Ascending aorta (tissue), 2 donors: ENCODE measurements at regions of chr12 and their contacts with region 1.

Region 1: GRCh38 chr12:52980693-52981423 is 25.4 kb upstream of the EIF4B start:
- DNase-seq: peak; percentile 50 to 95
- H3K4me3 ChIP-seq: no peak overlapping the region
- H3K27ac ChIP-seq: no peak overlapping the region
- H3K4me1 ChIP-seq: no peaks in the 10 kb centered on the region
- H3K27me3 ChIP-seq: no peaks in the 10 kb centered on the region
- CTCF ChIP-seq: peak; percentile 87 to 99 (median 96)

Region 2: GRCh38 chr12:52156736-52157565 is 823.9 kb before region 1 on chr12:
- intact Hi-C with region 1: loop called (anchors 2 kb)
- DNase-seq: peak in 1 of 2 donors; percentile 88
- H3K4me3 ChIP-seq: no peak overlapping the region
- H3K27ac ChIP-seq: no peak overlapping the region
- H3K4me1 ChIP-seq: peaks cover 0 to 6% of the 10 kb centered on the region in 2 donors
- H3K27me3 ChIP-seq: no peaks in the 10 kb centered on the region
- CTCF ChIP-seq: peak; percentile 87 to 98 (median 95)

Region 3: DNA sequence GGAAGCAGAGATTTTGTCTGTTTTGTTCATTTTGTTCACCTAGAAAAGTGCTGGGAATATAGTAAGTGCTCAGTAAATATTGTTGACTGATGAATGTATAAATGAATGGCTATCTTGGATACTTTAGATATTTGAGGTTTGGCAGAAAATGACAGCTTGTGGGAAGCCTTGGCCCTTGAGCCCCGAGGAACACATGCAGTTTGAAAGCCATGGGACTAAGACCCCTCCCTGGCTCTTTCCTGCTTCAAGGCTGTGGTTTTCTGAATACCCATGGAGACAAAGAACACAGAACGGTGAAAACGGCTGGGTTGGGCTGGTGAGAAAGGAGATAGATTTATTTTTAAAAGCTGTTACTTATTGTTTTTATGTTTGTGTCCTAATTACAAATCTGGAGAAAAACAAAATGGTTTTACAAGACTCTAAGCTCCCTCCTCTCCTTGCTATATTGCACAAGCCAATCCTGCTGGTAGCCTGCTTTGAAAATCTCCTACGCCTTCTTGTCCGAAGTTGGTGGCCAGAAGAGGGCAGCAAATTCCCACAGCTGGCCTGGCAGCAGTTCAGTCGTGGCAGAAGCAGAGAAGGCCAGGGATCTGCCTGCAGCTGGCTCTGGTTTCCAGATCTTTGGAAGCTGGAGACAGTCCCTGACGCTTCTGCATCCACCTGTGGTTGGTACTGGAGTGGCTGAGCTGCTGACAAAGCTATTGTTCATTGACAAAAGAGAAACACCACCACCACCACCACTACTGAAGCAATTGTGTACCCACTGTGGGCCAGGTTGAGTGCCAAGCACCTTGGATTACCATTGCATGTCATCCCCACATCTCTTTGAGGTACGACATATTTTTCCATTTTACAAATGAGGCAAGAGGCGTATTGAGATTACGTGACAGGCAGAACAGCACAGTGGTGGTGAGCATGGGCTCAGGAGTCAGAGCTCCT is 608.4 kb before region 1 on chr12:
- intact Hi-C with region 1: loop called (anchors 10 kb)
- DNase-seq: peak; percentile 29 to 87
- H3K4me3 ChIP-seq: no peak overlapping the region
- H3K27ac ChIP-seq: peak overlapping the region in 1 of 2 donors; percentile 68
- H3K4me1 ChIP-seq: peaks cover 0 to 11% of the 10 kb centered on the region in 2 donors
- H3K27me3 ChIP-seq: no peaks in the 10 kb centered on the region
- CTCF ChIP-seq: peak; percentile 65 to 84 (median 66)

Region 4: DNA sequence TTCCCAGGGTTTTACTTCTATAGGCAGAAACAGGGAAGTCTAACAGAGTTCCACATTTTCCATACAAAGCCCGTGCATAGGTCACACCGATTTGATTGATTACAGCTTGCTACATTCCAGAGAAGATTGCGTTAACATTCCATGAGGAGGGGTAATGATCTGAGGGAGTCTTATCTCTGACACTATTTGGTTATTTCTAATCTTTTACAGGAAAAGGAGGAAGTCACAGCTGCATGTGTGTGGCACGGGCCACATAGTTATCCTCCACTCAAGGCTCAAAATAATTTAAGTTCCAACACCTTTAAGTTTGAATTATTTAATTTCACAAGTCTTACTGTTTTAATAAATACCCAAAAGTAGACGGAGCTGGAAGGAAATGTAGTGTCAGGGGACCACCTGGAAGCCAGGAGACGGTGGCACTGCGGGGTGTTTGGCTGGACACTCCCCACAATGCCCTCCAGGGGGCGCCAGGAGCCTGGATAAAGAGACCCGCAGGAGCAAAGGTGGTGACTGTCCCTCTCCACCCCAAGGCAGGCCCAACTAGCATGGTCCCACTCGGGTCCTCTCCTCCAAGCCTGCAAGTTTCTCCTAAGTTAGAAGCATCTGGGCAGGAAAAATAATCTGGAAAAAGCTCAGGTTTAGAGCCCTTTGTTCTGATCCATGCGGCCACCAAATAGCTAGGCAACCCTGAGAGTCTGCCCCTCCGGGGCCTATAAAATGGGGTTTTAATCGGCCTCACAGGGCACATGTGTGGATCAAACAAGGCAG is 96.1 kb before region 1 on chr12:
- intact Hi-C with region 1: loop called (anchors 1 kb)
- DNase-seq: peak in 1 of 2 donors; percentile 82
- H3K4me3 ChIP-seq: no peak overlapping the region
- H3K27ac ChIP-seq: no peak overlapping the region
- H3K4me1 ChIP-seq: no peaks in the 10 kb centered on the region
- H3K27me3 ChIP-seq: no peaks in the 10 kb centered on the region
- CTCF ChIP-seq: peak; percentile 84 to 89 (median 88)

Region 5: DNA sequence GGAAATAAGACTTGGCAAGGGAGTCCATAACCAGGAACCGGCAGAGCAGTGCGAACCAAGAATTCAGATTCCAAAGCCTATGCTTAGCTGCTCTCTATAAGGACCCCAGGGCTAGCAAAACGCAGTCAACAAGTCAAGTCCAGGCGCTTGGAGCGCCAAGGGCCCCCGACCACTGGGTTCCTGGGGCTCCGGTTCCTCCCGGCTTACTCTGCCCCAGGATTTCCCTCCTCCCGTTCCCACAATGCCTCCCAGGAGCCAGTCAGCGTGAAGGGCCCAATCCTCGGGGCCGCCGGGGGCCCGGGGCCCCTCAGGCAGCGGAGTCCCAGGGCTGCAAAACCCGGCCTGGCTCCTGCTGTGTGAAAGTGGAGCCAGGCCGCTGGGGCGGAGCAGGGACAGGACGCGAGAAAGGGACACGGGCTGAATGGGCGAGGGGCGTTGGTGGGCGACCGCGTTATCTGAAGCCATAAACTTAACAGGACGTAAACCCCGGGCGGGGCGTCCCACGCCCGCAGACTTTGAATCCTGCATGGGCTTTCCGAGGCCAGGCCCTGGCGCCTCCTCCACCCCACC is 77.5 kb before region 1 on chr12:
- intact Hi-C with region 1: loop called (anchors 5 kb)
- DNase-seq: peak; percentile 21 to 87
- H3K4me3 ChIP-seq: peak overlapping the region; percentile 71 to 73
- H3K27ac ChIP-seq: peak overlapping the region; percentile 68 to 83
- H3K4me1 ChIP-seq: peaks cover 0 to 10% of the 10 kb centered on the region in 2 donors
- H3K27me3 ChIP-seq: no peaks in the 10 kb centered on the region
- CTCF ChIP-seq: no peak

Region 6: GRCh38 chr12:52942066-52942900 is 38.6 kb before region 1 on chr12:
- intact Hi-C with region 1: no loop called
- DNase-seq: no peak
- H3K4me3 ChIP-seq: no peak overlapping the region
- H3K27ac ChIP-seq: no peak overlapping the region
- H3K4me1 ChIP-seq: no peaks in the 10 kb centered on the region
- H3K27me3 ChIP-seq: no peaks in the 10 kb centered on the region
- CTCF ChIP-seq: no peak

Region 7: DNA sequence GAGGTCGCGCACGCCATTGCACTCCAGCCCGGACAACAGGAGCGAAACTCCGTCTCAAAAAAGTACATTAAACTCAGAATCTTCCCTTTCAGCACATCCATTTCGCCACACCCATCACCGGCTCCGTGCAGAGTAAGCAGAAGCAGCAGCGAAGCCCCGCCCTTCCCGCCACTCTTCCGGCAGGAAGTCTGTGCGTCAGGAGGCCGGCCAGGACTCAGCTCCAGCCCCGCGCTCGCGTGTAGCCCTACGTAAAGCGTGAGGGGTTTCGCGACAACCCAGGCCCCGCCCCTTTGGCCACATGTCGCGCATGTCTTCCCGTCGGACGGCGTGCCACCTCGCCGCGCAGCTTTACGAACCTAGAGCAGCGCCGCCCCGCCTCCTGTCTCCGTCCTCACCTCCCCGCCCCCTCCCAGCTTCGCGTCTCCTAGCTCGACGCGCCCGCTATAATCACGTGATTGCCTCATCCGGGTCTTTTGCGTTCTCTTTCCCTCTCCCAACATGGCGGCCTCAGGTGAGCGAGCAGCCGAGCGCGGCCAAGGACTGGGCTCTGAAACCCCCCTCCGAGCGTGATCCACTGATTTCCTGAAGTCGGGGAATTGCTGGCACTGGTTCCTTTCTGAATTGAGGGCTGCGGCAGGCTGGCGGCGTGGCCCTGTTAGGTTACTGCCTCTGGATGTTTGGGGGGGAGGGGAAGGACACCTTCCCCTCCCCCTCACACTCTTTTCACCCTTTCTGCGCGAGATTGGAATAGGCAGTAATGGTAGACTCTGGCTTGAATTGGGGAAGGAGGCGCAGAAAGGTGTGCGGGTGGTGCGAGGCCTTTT is 25.3 kb after region 1 on chr12 and contains the start of gene EIF4B:
- intact Hi-C with region 1: no loop called
- DNase-seq: peak; percentile 98 to 100
- H3K4me3 ChIP-seq: peak within 1 kb of the TSS; percentile 84 to 89
- H3K27ac ChIP-seq: peak within 1 kb of the TSS; percentile 79 to 87
- H3K4me1 ChIP-seq: peaks cover 14 to 28% of the 10 kb centered on the region in 2 donors
- H3K27me3 ChIP-seq: no peaks in the 10 kb centered on the region
- CTCF ChIP-seq: no peak
- total RNA-seq, gene EIF4B: 181 TPM

Region 8: DNA sequence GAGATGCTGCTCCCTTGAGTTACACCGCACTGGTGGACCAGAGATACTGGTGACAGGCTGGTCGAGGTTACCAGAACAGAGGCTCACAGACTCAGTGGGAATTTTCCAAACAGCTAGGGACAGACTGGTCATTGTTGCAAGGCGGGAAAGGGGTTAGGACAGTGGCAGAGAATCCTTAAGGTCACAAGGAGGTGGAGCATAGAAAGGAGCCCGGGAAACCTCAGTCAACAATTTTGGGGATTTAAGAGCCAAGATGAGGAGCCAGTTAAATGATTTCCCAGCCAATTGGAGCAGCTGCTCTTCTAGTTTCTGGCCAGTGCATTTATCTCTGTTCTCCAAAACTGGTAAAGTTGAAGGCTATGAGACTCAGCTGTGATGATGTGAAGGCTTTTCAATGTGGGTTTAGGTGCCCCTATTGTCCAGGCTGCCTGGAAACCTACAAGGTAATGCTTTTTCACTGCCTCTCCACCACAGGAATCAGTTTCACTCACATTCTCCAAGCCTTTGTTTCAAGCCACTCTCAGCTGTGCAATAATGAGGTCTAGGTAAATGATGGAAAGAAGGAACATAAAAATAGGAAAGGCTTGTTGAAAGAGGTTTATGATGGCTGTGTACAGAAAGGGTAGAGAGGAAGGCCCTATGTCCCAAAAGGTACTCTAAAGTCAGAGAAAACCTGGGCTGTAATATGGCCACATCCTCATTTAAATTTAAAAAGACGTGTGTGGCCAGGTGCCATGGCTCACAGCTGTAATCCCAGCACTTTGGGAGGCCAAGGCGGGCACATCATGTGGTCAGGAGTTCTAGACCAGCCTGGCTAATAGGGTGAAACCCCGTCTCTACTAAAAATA is 62.0 kb after region 1 on chr12:
- intact Hi-C with region 1: no loop called
- DNase-seq: no peak
- H3K4me3 ChIP-seq: no peak overlapping the region
- H3K27ac ChIP-seq: peak overlapping the region; percentile 99 to 100
- H3K4me1 ChIP-seq: peaks cover 13 to 29% of the 10 kb centered on the region in 2 donors
- H3K27me3 ChIP-seq: no peaks in the 10 kb centered on the region
- CTCF ChIP-seq: no peak